ENCODE measurements at regions of chr2 and their contacts with region 1.

Region 1: GRCh38 chr2:181904022-181904632 is 12.6 kb downstream of the ITPRID2 start:
- DNase-seq: no peak
- H3K4me3 ChIP-seq: no peak overlapping the region; the same call in 1 of the 2 replicates
- H3K27ac ChIP-seq: no peak overlapping the region
- H3K27me3 ChIP-seq: no peaks in the 10 kb centered on the region
- CTCF ChIP-seq: peak; percentile 67

Region 2: GRCh38 chr2:181578829-181579228 is 325.3 kb before region 1 on chr2:
- CTCF ChIA-PET with region 1: no interaction called
- POLR2A ChIA-PET with region 1: no interaction called
- DNase-seq: no peak
- H3K4me3 ChIP-seq: no peak overlapping the region
- H3K27ac ChIP-seq: no peak overlapping the region
- H3K27me3 ChIP-seq: no peaks in the 10 kb centered on the region
- CTCF ChIP-seq: no peak

Region 3: GRCh38 chr2:181742922-181743722 is 161.0 kb before region 1 on chr2:
- CTCF ChIA-PET with region 1: interaction called, 122 read pairs
- POLR2A ChIA-PET with region 1: no interaction called
- DNase-seq: peak; percentile 11
- H3K4me3 ChIP-seq: no peak overlapping the region
- H3K27ac ChIP-seq: no peak overlapping the region
- H3K27me3 ChIP-seq: no peaks in the 10 kb centered on the region
- CTCF ChIP-seq: peak; percentile 66

Region 4: GRCh38 chr2:181891258-181891965 is 12.7 kb before region 1 on chr2 and contains the start of gene ITPRID2:
- CTCF ChIA-PET with region 1: interaction called, 40 read pairs
- POLR2A ChIA-PET with region 1: no interaction called
- DNase-seq: peak; percentile 70
- H3K4me3 ChIP-seq: peak within 1 kb of the TSS; percentile 89
- H3K27ac ChIP-seq: peak within 1 kb of the TSS; percentile 80
- H3K27me3 ChIP-seq: no peaks in the 10 kb centered on the region
- CTCF ChIP-seq: no peak
- polyA plus RNA-seq, gene ITPRID2: 101 and 110 TPM in 2 replicates

Region 5: GRCh38 chr2:181916726-181917718 is 12.9 kb after region 1 on chr2:
- CTCF ChIA-PET with region 1: interaction called, 10 read pairs
- POLR2A ChIA-PET with region 1: no interaction called
- DNase-seq: no peak
- H3K4me3 ChIP-seq: no peak overlapping the region
- H3K27ac ChIP-seq: peak overlapping the region; percentile 35
- H3K27me3 ChIP-seq: no peaks in the 10 kb centered on the region
- CTCF ChIP-seq: no peak

Region 6: DNA sequence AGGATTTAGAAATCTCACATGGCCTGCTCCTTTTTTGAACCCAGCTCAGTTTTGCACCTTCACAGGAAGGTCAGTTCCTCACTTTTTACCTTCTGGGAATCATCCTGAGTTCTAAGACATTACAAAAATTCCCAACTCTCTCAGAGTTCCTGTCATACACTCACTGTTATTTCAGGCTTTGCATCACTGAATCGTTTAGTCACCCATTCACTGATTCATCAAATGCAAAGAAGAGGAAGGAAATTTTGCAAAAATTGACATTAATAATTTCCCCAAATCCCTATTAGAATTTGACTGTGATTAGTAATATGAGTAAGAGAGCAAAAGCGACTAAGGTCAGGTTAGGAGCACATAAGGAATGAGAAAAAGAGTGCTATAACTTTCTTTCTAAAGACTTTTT is 325.2 kb after region 1 on chr2:
- CTCF ChIA-PET with region 1: no interaction called
- POLR2A ChIA-PET with region 1: no interaction called
- DNase-seq: no peak
- H3K4me3 ChIP-seq: no peak overlapping the region
- H3K27ac ChIP-seq: no peak overlapping the region
- H3K27me3 ChIP-seq: no peaks in the 10 kb centered on the region
- CTCF ChIP-seq: no peak